K562 (cell line): ENCODE measurements at regions of chrX and their contacts with region 1.

Region 1: GRCh38 chrX:134537179-134537955 is 77.4 kb downstream of the HPRT1 start:
- DNase-seq: peak; percentile 26 to 47 (median 34)
- ATAC-seq: peak; percentile 88
- H3K4me3 ChIP-seq: no peak overlapping the region
- H3K27ac ChIP-seq: no peak overlapping the region
- H3K4me1 ChIP-seq: peaks cover 4 to 10% of the 10 kb centered on the region in 2 experiments; a peak in 3 of 5 replicates
- H3K27me3 ChIP-seq: no peaks in the 10 kb centered on the region
- CTCF ChIP-seq: no peak
- EP300 ChIP-seq: peak; percentile 31; the same call in 1 of the 2 replicates
- POLR2A ChIP-seq: no peak
- RAD21 ChIP-seq: no peak

Region 2: DNA sequence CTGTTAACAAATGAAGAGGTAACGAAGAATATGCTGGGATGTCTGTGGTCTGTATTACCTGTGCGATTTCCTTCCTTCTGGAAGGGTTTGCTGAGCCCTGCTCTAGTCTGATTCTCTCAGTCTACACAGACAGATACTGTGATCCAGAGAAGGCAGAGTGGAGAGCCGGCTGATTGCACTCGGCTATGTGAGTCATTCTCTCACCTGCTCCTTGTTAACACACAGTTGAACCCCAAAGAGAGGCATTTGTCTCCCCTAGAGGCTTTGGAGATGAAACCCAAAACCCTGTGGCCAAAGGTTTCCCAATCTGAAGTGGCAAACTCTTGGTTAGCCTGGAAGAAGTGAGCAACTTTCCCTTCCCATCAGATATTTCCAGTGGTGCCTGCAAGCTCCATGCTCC is 1044.0 kb before region 1 on chrX:
- CTCF ChIA-PET with region 1: no interaction called
- POLR2A ChIA-PET with region 1: no interaction called
- in situ Hi-C with region 1: no loop called
- intact Hi-C with region 1: no loop called
- DNase-seq: no peak
- ATAC-seq: no peak
- H3K4me3 ChIP-seq: no peak overlapping the region
- H3K27ac ChIP-seq: no peak overlapping the region
- H3K4me1 ChIP-seq: no peaks in the 10 kb centered on the region
- H3K27me3 ChIP-seq: no peaks in the 10 kb centered on the region
- CTCF ChIP-seq: no peak
- EP300 ChIP-seq: no peak
- POLR2A ChIP-seq: no peak
- RAD21 ChIP-seq: no peak

Region 3: DNA sequence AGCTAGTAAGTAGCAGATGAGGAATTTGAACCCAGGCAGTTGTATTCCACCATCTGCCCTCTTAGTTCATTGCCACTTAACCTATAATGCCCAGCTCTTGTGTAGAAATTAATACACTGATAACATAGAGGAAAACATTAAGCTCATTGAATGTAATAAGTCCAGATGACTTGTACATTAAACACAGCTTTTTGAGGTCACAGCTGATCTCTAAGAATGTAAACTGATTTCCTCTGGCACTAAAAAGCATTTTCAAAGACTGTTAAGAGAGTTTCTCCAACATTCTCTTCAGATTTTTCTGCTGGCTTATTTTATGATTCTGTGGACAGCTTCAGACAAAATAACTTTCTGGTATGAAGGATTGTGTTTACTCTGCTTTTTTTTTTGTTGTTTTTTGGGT is 34.7 kb before region 1 on chrX:
- CTCF ChIA-PET with region 1: no interaction called
- POLR2A ChIA-PET with region 1: no interaction called
- in situ Hi-C with region 1: no loop called
- intact Hi-C with region 1: no loop called
- DNase-seq: no peak
- ATAC-seq: no peak
- H3K4me3 ChIP-seq: no peak overlapping the region
- H3K27ac ChIP-seq: no peak overlapping the region
- H3K4me1 ChIP-seq: no peaks in the 10 kb centered on the region; a peak in 1 of 5 replicates
- H3K27me3 ChIP-seq: no peaks in the 10 kb centered on the region
- CTCF ChIP-seq: no peak
- EP300 ChIP-seq: no peak
- POLR2A ChIP-seq: no peak
- RAD21 ChIP-seq: no peak

Region 4: DNA sequence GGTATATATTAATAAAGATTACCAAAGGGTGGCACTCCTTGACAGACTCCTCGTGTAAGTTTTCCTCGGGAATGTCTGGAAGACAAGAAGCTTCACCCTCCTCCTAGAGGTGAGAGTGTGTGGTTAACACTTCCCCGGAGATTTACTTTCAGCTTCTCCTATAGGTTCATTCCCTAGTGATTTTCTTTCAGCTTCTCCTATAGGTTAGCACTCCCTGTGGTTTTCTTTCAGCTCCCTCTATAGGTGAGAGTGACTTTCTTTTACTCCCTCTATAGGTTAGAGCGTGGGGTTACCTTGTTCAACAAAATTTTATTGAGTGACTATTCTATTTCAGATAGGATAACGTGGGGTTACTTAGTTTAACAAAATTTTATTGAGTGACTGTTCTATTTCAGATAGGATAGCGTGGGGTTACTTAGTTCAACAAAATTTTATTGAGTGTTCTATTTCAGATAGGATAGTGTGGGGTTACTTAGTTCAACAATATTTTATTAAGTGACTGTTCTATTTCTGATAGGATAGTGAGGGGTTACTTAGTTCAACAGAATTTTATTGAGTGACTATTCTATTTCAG is 226.9 kb after region 1 on chrX:
- CTCF ChIA-PET with region 1: interaction called, 3 read pairs
- POLR2A ChIA-PET with region 1: no interaction called
- in situ Hi-C with region 1: loop called (anchors 10 kb)
- intact Hi-C with region 1: no loop called
- DNase-seq: peak; percentile 59 to 88 (median 72)
- ATAC-seq: peak; percentile 99
- H3K4me3 ChIP-seq: no peak overlapping the region
- H3K27ac ChIP-seq: no peak overlapping the region
- H3K4me1 ChIP-seq: no peaks in the 10 kb centered on the region
- H3K27me3 ChIP-seq: no peaks in the 10 kb centered on the region
- CTCF ChIP-seq: peak; percentile 56 to 92 (median 84); a peak in 5 of 6 replicates
- EP300 ChIP-seq: no peak
- POLR2A ChIP-seq: no peak
- RAD21 ChIP-seq: peak; percentile 16 to 48; a peak in 3 of 4 replicates

Region 5: GRCh38 chrX:134782796-134783195 is 245.4 kb after region 1 on chrX:
- CTCF ChIA-PET with region 1: interaction called, 10 read pairs
- POLR2A ChIA-PET with region 1: no interaction called
- in situ Hi-C with region 1: no loop called
- intact Hi-C with region 1: no loop called
- DNase-seq: peak in 1 of 4 experiments; percentile 35
- ATAC-seq: 0 out of 3 replicates have a peak, but pooled peaks have one; percentile 42
- H3K4me3 ChIP-seq: no peak overlapping the region
- H3K27ac ChIP-seq: no peak overlapping the region
- H3K4me1 ChIP-seq: no peaks in the 10 kb centered on the region
- H3K27me3 ChIP-seq: no peaks in the 10 kb centered on the region
- CTCF ChIP-seq: peak; percentile 32 to 52 (median 43); a peak in 5 of 6 replicates
- EP300 ChIP-seq: no peak
- POLR2A ChIP-seq: no peak
- RAD21 ChIP-seq: peak; percentile 57 to 65